Thyroid gland (tissue), 4 donors: ENCODE measurements at regions of chr3 and their contacts with region 1.

Region 1: DNA sequence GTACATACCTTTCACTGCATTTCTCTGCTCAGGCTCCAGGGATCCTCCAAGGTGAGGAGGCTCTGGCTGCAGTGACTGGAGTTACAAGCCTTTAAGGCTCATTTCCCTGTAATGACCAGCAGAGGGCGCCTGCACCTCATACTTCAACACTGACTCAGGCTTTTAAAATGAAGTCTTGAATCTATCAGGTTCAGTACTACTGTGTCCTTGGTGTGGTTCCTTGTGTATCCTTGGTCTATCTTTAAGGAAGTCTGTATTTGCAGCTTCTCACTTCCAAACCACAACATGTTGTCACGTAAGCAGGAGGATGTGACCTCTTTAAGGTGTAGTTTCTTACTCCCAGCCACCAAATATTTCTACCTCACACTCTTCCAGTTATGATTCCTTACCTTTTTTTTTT is 122.5 kb upstream of the ZBED2 start:
- DNase-seq: peak; percentile 79 to 84
- H3K4me3 ChIP-seq: no peak overlapping the region
- H3K27ac ChIP-seq: peak overlapping the region in 1 of 3 donors; percentile 19
- H3K4me1 ChIP-seq: no peaks in the 10 kb centered on the region
- H3K27me3 ChIP-seq: no peaks in the 10 kb centered on the region
- CTCF ChIP-seq: peak; percentile 89 to 97 (median 94)
- POLR2A ChIP-seq: no peak

Region 2: DNA sequence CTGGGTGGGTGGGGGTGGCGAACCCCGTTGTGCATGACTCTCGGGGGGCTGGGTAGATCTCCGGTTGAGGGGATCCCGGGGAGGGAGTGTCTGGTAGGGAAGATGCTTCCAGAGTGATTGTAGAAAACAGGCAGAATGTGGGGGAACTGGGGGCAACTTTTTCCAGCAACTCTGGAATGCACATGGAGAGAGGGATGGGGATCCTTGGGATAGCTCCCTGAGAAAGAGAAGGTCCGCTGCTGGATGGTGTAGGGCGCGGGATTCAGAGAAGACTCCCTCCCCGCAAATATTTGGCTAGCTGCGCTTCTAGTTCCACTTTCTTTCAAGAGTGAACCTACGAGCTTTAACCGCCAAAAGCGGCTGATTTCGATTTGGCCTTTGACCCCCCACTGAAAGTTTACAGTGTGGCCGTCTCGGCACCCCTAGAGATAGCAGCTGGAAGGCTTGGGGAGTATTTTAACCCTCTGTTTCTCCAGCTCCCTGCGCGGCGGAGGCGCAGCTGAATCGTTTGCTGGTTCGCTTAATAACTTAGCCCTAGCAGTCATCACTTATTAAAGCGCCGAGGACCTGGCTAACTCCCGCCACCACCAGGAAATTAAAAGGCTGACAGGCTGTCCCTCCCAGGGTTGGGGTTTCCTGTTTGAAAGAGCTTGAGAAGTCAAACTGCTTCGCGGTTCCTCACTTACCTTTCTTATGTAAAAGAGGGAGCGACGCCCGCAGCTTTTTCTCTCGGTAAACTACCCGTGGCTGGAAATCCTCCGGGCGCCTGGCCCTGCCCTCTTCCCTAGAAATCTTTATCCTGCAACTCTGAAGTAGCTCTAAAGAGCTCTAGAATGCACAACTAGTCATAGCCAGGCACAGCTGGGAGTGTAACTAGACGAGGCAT is 142.6 kb after region 1 on chr3:
- intact Hi-C with region 1: loop called (anchors 5 kb)
- DNase-seq: peak; percentile 68
- H3K4me3 ChIP-seq: peak overlapping the region; percentile 40 to 66 (median 54)
- H3K27ac ChIP-seq: peak overlapping the region; percentile 75 to 93 (median 81)
- H3K4me1 ChIP-seq: peaks cover 0 to 10% of the 10 kb centered on the region in 2 donors
- H3K27me3 ChIP-seq: no peaks in the 10 kb centered on the region
- CTCF ChIP-seq: peak in 4 of 6 experiments; percentile 31 to 54 (median 46)
- POLR2A ChIP-seq: peak in 1 of 2 donors; percentile 57

Region 3: GRCh38 chr3:111967651-111968274 is 250.2 kb after region 1 on chr3:
- intact Hi-C with region 1: loop called (anchors 5 kb)
- DNase-seq: peak; percentile 88 to 91
- H3K4me3 ChIP-seq: no peak overlapping the region
- H3K27ac ChIP-seq: peak overlapping the region; percentile 29 to 61 (median 58)
- H3K4me1 ChIP-seq: peaks cover 24 to 36% of the 10 kb centered on the region in 2 donors
- H3K27me3 ChIP-seq: no peaks in the 10 kb centered on the region
- CTCF ChIP-seq: peak; percentile 69 to 97 (median 84)
- POLR2A ChIP-seq: no peak